ENCODE measurements at regions of chr14 and their contacts with region 1.

Region 1: DNA sequence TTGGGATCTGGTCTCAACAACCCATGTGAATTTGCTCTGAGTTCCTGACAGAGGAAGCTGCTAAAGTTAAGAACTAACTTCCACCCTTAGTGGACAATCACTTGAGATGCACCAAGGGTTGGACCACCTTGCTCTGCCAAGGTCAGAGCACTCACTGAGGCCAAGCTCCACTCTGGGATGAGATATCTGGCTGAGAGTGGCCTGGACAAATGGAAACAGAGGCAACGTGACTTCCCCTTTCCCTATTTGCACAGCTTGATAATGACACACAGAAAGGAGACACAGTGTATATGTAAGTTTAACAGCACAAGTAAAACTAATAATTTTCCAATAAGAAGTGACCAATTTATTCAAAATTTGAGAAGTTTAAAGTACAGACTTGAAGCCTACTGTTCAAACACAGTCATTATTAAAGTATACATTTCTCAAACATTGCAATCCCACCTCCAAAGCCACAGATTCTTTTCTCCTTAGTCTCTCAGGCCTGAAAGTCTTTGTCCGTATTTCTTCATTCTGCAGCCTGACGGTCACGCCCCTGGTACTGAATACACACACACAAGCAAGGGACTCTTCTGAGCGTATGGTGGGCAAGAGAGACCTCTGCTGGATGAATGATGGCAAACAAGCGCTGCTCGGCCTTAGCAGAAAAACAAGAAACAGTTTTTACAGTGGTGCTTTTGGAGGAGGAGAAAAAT is 28.6 kb downstream of the TMEM30B start:
- DNase-seq: peak; percentile 89
- H3K4me3 ChIP-seq: no peak overlapping the region
- H3K27ac ChIP-seq: no peak overlapping the region
- H3K4me1 ChIP-seq: peaks cover 6% of the 10 kb centered on the region
- H3K27me3 ChIP-seq: no peaks in the 10 kb centered on the region
- CTCF ChIP-seq: peak; percentile 93 to 95

Region 2: DNA sequence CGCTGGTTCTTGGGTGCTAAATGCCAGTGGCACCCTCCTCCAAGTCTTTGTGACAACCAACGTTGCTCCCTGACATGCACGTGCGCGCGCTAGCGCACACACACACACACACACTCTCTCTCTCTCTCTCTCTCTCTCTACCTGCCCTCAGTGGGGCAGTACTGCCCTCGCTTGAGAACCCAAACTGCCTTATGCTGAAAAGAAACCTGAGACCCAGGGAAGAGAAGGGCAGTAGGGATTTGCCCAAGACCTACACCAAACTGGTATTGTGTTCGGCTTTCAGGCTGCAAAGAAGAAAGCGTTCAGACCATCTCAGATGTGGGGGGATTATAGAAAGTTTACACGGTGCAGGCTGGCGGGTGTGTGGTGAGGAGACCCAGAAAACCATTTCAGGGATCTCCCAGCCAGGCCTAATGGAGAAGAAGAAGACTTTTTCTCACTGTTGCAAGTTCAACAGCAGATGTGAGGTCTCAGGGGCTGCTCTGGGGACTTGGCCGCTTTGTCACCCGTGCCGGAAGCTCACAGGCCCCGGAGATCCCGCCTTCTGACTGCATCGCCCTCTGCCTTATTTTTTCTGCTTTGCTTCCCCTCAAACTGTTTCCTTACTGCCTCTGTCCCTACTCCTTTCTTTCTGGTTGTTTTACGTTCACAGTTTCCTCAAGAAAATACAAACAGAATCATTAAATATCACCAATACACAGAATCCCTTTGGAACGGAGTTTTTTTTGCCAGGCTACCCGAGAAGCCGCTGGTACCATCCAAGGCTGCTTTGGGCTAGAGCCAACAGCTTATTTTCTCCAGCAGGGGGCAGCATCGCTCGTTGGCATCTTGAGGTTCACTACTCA is 921.1 kb before region 1 on chr14:
- CTCF ChIA-PET with region 1: no interaction called
- dilution Hi-C with region 1: no loop called
- in situ Hi-C with region 1: loop called in 1 of 2 experiments (anchors 25 kb)
- intact Hi-C with region 1: no loop called
- DNase-seq: no peak
- H3K4me3 ChIP-seq: peak overlapping the region; percentile 14 to 19 (median 18)
- H3K27ac ChIP-seq: no peak overlapping the region
- H3K4me1 ChIP-seq: peaks cover 8% of the 10 kb centered on the region
- H3K27me3 ChIP-seq: peaks cover 9% of the 10 kb centered on the region
- CTCF ChIP-seq: peak; percentile 73 to 76

Region 3: GRCh38 chr14:60561845-60562746 is 690.4 kb before region 1 on chr14:
- CTCF ChIA-PET with region 1: no interaction called
- dilution Hi-C with region 1: no loop called
- in situ Hi-C with region 1: no loop called
- intact Hi-C with region 1: loop called (anchors 1 kb)
- DNase-seq: peak; percentile 47
- H3K4me3 ChIP-seq: no peak overlapping the region
- H3K27ac ChIP-seq: no peak overlapping the region
- H3K4me1 ChIP-seq: no peaks in the 10 kb centered on the region
- H3K27me3 ChIP-seq: no peaks in the 10 kb centered on the region
- CTCF ChIP-seq: peak; percentile 21 to 43

Region 4: GRCh38 chr14:60656686-60657455 is 595.6 kb before region 1 on chr14:
- CTCF ChIA-PET with region 1: no interaction called
- dilution Hi-C with region 1: no loop called
- in situ Hi-C with region 1: no loop called
- intact Hi-C with region 1: loop called (anchors 1 kb)
- DNase-seq: peak; percentile 68
- H3K4me3 ChIP-seq: peak overlapping the region; percentile 57 to 76 (median 72)
- H3K27ac ChIP-seq: no peak overlapping the region
- H3K4me1 ChIP-seq: peaks cover 20% of the 10 kb centered on the region
- H3K27me3 ChIP-seq: peaks cover 18% of the 10 kb centered on the region
- CTCF ChIP-seq: peak in 1 of 2 donors; percentile 58

Region 5: DNA sequence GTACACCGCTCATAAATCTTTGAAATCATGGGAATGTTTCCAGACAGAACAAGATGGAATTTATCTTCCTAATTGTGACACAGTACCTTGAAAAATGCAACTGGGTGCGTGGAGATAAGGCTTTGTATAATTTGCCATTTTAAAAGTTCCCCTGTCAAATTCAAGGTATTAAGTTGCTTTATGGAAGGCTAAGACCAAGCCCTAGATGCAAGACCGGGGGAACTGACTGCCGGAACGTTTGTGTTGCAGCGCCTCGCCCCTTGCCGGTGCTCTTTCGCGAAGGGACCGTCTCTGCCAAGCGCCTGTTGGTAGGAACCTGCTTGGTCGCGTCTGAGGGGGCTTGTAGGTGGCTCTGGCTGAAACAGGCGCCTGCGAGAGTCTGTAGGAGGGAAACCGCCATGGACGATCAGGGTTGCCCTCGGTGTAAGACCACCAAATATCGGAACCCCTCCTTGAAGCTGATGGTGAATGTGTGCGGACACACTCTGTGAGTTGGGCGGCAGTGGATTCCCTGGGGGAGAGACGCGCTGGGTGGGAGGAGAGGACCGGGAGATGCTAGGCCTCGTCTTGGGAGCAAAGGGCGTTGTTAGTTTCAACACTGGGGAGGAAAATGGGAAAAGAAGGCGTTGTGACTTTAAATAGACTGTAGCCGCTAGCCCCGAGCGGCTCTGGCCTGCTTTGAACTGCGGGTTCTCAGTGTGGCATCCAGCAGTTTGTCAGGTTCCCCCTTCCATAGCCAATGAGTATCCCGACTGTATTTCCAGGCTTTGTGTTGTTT is 517.9 kb before region 1 on chr14 and contains the start of gene MNAT1:
- CTCF ChIA-PET with region 1: no interaction called
- dilution Hi-C with region 1: no loop called
- in situ Hi-C with region 1: no loop called
- intact Hi-C with region 1: loop called (anchors 2 kb)
- DNase-seq: peak; percentile 80
- H3K4me3 ChIP-seq: peak within 1 kb of the TSS; percentile 84 to 89 (median 85)
- H3K27ac ChIP-seq: peak within 1 kb of the TSS; percentile 70
- H3K4me1 ChIP-seq: peaks cover 2% of the 10 kb centered on the region
- H3K27me3 ChIP-seq: no peaks in the 10 kb centered on the region
- CTCF ChIP-seq: peak in 1 of 2 donors; percentile 18
- total RNA-seq, gene MNAT1: 61.5 to 68.4 TPM

Region 6: DNA sequence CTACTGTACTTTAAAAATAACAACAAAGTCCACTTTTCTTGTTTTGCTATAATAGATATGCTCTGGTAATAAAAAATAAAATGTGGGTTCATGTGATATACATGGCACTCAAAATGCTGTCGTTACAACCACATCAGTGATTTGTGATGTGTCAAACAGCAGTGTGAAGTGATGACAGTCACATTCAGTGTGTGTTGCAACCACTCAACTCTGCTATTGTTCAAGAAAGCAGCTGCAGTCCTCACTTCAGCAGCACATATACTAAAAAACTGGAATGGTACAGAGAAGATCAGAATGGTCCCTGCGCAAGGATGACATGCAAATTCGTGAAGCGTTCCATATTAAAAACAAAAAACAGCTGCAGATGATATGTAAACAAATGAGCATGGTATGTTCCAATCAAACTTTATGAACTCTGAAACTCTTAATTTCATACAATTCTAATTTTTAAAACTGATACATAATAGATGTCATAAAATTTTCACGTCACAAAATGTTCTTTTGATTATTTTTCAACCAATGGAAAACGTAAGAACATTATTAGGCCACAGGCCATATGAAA is 278.3 kb before region 1 on chr14:
- CTCF ChIA-PET with region 1: no interaction called
- dilution Hi-C with region 1: no loop called
- in situ Hi-C with region 1: no loop called
- intact Hi-C with region 1: no loop called
- DNase-seq: no peak
- H3K4me3 ChIP-seq: no peak overlapping the region
- H3K27ac ChIP-seq: no peak overlapping the region
- H3K4me1 ChIP-seq: peaks cover 7% of the 10 kb centered on the region
- H3K27me3 ChIP-seq: no peaks in the 10 kb centered on the region
- CTCF ChIP-seq: no peak

Region 7: DNA sequence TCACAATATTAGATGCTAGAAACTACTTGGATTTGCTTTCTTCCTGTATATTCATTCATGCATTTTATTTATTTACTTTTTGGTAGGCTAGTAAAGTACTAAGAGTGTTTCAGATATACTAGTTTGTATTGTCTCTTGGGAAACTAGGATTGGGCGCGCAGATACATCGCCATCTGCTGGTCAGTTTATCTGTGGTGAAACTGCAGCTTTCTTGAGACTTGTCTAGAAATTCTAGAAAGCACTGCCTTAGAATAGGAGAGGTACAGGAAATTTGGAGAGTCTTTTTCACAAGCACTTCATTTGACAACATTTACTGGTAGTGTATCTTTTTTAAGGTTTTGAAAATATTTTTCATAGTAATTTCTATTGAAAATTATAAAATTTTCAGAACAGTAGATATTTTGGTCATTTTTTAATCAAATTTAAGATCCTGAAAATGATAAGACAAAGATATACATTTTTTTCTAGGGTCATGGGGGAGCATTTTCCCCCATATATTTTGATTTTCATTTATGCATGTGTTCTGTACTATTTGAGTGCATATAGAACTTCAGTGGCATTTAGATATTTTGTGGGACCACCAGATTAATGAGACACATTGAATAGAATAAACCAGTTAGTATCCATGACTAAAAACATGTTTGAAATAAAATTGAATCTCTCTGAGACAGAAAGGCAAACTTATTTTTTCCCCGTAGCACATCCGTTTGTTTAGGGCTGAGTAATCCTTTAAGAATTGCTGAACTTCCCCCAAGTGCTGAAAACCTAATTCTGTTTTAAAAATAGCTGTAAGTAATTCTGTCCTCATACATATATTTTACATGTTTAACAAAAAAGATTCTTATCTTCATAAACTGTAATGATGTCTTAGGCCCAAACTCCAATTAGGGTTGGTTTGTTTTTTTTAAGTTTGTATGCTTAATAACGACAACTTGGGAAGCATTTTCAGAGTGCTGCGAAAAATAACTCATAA is 227.0 kb before region 1 on chr14:
- CTCF ChIA-PET with region 1: no interaction called
- dilution Hi-C with region 1: no loop called
- in situ Hi-C with region 1: no loop called
- intact Hi-C with region 1: loop called (anchors 1 kb)
- DNase-seq: peak; percentile 55
- H3K4me3 ChIP-seq: no peak overlapping the region
- H3K27ac ChIP-seq: no peak overlapping the region
- H3K4me1 ChIP-seq: peaks cover 2% of the 10 kb centered on the region
- H3K27me3 ChIP-seq: no peaks in the 10 kb centered on the region
- CTCF ChIP-seq: peak; percentile 84 to 90

Region 8: GRCh38 chr14:61196792-61197191 is 55.7 kb before region 1 on chr14:
- CTCF ChIA-PET with region 1: no interaction called
- dilution Hi-C with region 1: no loop called
- in situ Hi-C with region 1: no loop called
- intact Hi-C with region 1: loop called (anchors 1 kb)
- DNase-seq: peak; percentile 25
- H3K4me3 ChIP-seq: no peak overlapping the region
- H3K27ac ChIP-seq: no peak overlapping the region
- H3K4me1 ChIP-seq: no peaks in the 10 kb centered on the region
- H3K27me3 ChIP-seq: no peaks in the 10 kb centered on the region
- CTCF ChIP-seq: peak; percentile 49 to 67

Measured in mammary epithelial cell (primary cell).